Naive thymus-derived CD4-positive, alpha-beta T cell (primary cell): ENCODE measurements at regions of chr4 and their contacts with region 1.

Region 1: DNA sequence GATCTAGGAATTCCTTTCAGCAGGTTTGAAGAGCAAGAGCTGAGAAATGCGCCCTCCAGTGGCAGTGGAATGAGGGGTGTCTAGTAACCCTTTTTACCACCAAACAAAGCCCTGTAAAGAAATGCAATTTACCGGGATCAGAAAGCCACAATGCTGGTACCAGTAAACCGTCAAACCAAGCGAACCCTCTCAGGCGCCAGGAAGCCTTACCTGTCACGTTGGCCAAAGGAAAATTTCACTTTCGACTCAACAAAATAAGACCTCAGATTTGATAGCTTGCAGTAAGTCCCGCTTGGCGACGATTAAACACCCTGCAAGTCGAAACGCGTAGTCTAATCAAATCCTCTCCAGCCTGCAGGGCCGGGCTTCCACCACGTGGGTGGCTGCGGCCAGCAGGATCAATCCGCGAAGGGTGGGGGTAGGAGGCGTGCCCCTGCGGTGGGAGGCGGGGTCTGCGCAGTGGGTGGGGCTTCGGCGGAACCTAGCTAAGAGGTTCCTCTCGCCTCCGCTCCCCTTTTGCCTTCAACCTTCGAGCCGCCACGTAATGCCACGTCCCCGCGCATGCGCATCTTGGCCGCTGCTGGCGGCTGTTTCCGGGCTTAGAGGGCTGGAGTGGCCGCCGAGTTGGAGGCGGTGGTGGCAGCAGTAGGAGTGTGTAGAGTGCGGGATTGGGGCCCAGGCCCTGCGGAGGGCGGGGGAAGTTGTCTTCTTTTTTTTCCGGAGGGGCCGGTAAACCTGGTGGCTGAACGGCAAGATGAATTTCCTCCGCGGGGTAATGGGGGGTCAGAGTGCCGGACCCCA is at the start of gene USO1:
- DNase-seq: peak; percentile 98 to 100 (median 99)
- ATAC-seq: peak; percentile 98
- H3K4me3 ChIP-seq: peak within 1 kb of the TSS; percentile 87
- H3K4me3 Mint-ChIP-seq: peak within 1 kb of the TSS; percentile 93 to 100 (median 100)
- H3K27ac ChIP-seq: peak within 1 kb of the TSS; percentile 91
- H3K27ac Mint-ChIP-seq: peak within 1 kb of the TSS; percentile 97 to 100 (median 99)
- H3K4me1 ChIP-seq: peaks cover 25 to 30% of the 10 kb centered on the region in 2 donors
- H3K4me1 Mint-ChIP-seq: peaks cover 32 to 60% (median 59%) of the 10 kb centered on the region in 7 donors
- H3K27me3 ChIP-seq: no peaks in the 10 kb centered on the region
- H3K27me3 Mint-ChIP-seq: peaks cover 0 to 4% (median 0%) of the 10 kb centered on the region in 5 donors
- total RNA-seq, gene USO1: 17.8 to 54.8 (median 35.0) TPM

Region 2: GRCh38 chr4:75653845-75654503 is 70.3 kb before region 1 on chr4:
- CTCF ChIA-PET with region 1: interaction called, 16 read pairs
- POLR2A ChIA-PET with region 1: interaction called, 16 read pairs
- intact Hi-C with region 1: loop called (anchors 1 kb)
- DNase-seq: no peak
- ATAC-seq: no peak
- H3K4me3 ChIP-seq: no peak overlapping the region
- H3K4me3 Mint-ChIP-seq: peak overlapping the region in 5 of 10 donors; percentile 31 to 61 (median 49)
- H3K27ac ChIP-seq: peak overlapping the region; percentile 82
- H3K27ac Mint-ChIP-seq: peak overlapping the region; percentile 5 to 94 (median 86)
- H3K4me1 ChIP-seq: peaks cover 19 to 36% of the 10 kb centered on the region in 2 donors
- H3K4me1 Mint-ChIP-seq: peaks cover 16 to 66% (median 51%) of the 10 kb centered on the region in 7 donors
- H3K27me3 ChIP-seq: no peaks in the 10 kb centered on the region
- H3K27me3 Mint-ChIP-seq: no peaks in the 10 kb centered on the region

Region 3: GRCh38 chr4:75698162-75698962 is 25.9 kb before region 1 on chr4:
- CTCF ChIA-PET with region 1: interaction called, 3 read pairs
- POLR2A ChIA-PET with region 1: interaction called, 7 read pairs
- intact Hi-C with region 1: loop called (anchors 1 kb)
- DNase-seq: peak in 1 of 9 donors; percentile 11
- ATAC-seq: peak; percentile 80
- H3K4me3 ChIP-seq: no peak overlapping the region
- H3K4me3 Mint-ChIP-seq: peak overlapping the region in 5 of 10 donors; percentile 9 to 64 (median 29)
- H3K27ac ChIP-seq: peak overlapping the region; percentile 14
- H3K27ac Mint-ChIP-seq: peak overlapping the region; percentile 4 to 89 (median 67)
- H3K4me1 ChIP-seq: peaks cover 14 to 20% of the 10 kb centered on the region in 2 donors
- H3K4me1 Mint-ChIP-seq: peaks cover 16 to 43% (median 39%) of the 10 kb centered on the region in 7 donors
- H3K27me3 ChIP-seq: no peaks in the 10 kb centered on the region
- H3K27me3 Mint-ChIP-seq: no peaks in the 10 kb centered on the region

Region 4: GRCh38 chr4:75849461-75849860 is 125.2 kb after region 1 on chr4:
- CTCF ChIA-PET with region 1: interaction called, 4 read pairs
- POLR2A ChIA-PET with region 1: no interaction called
- intact Hi-C with region 1: loop called in 1 of 2 experiments (anchors 5 kb)
- DNase-seq: no peak
- ATAC-seq: peak; percentile 42
- H3K4me3 ChIP-seq: no peak overlapping the region
- H3K4me3 Mint-ChIP-seq: no peak overlapping the region
- H3K27ac ChIP-seq: no peak overlapping the region
- H3K27ac Mint-ChIP-seq: peak overlapping the region in 1 of 9 donors; percentile 80
- H3K4me1 ChIP-seq: no peaks in the 10 kb centered on the region
- H3K4me1 Mint-ChIP-seq: peaks cover 0 to 19% (median 0%) of the 10 kb centered on the region in 7 donors
- H3K27me3 ChIP-seq: no peaks in the 10 kb centered on the region
- H3K27me3 Mint-ChIP-seq: peaks cover 5 to 13% (median 6%) of the 10 kb centered on the region in 5 donors

Region 5: DNA sequence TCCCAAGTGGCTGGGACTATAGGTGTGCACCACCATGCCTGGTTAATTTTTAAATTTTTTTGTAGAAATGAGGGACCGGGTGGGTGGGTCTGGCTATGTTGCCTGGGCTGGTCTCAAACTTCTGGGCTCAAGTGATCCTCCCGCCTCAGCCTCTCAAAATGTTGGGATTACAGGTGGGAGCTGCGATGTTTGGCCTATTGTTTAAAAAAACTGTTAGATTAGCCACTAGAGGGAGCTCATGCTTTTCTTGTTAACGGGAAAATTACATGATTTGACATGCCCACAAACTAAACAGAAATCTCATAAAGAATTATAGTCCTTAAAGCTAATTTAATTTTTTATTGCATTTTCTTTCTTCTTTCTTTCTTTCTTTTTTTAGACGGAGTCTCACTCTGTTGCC is 271.5 kb after region 1 on chr4:
- CTCF ChIA-PET with region 1: no interaction called
- POLR2A ChIA-PET with region 1: no interaction called
- intact Hi-C with region 1: loop called (anchors 1 to 2 kb)
- DNase-seq: peak in 7 of 9 donors; percentile 13 to 62 (median 43)
- ATAC-seq: peak; percentile 39
- H3K4me3 ChIP-seq: no peak overlapping the region
- H3K4me3 Mint-ChIP-seq: no peak overlapping the region
- H3K27ac ChIP-seq: no peak overlapping the region
- H3K27ac Mint-ChIP-seq: no peak overlapping the region
- H3K4me1 ChIP-seq: no peaks in the 10 kb centered on the region
- H3K4me1 Mint-ChIP-seq: peaks cover 0 to 10% (median 5%) of the 10 kb centered on the region in 7 donors
- H3K27me3 ChIP-seq: no peaks in the 10 kb centered on the region
- H3K27me3 Mint-ChIP-seq: peaks cover 0 to 10% (median 2%) of the 10 kb centered on the region in 5 donors